AG04449 (cell line): ENCODE measurements at regions of chr17 and their contacts with region 1.

Region 1: DNA sequence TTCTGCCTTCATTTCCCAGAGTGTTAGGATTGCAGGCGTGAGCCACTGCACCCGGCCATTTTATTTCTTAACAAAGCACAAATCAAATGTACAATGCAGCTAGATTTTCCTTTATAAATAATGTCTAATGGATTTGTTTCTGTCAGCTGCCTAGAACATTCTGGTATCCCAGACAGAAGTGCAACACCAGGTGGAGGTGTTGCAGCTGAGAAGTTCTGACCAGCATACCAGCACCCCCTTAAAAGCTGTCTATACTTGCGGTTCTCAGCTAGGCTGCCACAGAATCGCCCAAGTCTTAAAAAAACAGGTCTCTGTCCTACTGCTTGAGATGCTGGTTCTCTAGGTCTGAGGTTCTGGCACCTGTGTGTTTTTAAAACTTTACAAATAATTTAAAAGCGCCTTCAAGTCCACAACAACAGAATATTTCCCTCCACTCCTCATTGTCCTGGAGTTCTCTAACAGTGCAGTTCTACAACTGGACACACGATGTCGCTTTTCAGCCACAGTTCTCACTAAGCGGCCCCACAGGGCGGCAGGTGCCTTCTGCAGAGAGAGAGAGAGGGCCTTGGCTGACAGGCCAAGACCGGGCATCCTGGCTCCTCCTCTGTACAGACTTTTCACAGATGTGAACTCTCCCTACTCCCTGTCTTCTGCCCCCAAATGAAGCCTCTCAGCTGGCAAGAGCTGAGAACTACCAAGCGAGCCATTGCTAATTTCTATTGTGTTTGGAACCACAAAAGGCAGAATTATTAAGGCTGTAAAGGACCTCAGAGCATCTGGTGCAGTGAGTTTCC is 32.6 kb upstream of the MEOX1 start:
- DNase-seq: no peak
- H3K4me3 ChIP-seq: no peak overlapping the region
- CTCF ChIP-seq: peak; percentile 78

Region 2: DNA sequence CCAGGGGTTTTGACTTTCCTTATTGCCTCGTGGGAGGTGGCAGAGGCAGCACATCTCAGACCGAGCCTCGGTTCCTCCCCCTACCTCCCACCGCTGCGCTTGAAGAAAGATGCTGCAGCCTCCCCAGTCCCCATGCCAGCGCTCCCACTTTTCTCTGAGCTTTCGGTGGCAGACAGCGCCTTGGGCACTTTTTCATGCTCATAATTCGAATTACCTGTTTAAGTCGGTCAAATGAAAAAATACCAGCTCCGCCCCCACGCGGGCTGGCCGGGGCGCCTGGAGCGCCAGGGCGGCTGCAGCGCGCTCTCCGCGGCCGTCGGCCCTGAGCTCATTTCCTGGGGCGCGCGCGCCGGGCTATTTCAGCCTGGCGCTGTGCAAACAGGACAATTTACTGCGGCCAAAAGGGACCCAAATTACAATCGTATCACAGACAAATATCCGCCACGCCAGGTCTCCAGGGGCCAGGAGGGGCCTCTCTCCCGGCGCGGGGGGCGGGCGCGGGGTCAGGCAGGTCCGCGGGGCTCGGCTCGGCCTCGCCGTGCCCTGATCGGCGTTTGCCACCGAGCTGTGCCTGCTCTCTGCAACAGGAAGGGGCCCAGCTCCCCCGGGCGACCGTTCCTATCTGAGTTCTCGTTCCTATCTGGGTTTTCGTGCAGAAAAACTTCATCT is 19.4 kb after region 1 on chr17:
- CTCF ChIA-PET with region 1: interaction called, 24 read pairs
- POLR2A ChIA-PET with region 1: no interaction called
- DNase-seq: no peak
- H3K4me3 ChIP-seq: peak overlapping the region; percentile 52
- CTCF ChIP-seq: no peak

Region 3: GRCh38 chr17:43740541-43740940 is 46.3 kb after region 1 on chr17:
- CTCF ChIA-PET with region 1: interaction called, 47 read pairs
- POLR2A ChIA-PET with region 1: no interaction called
- DNase-seq: no peak
- H3K4me3 ChIP-seq: no peak overlapping the region
- CTCF ChIP-seq: no peak

Region 4: DNA sequence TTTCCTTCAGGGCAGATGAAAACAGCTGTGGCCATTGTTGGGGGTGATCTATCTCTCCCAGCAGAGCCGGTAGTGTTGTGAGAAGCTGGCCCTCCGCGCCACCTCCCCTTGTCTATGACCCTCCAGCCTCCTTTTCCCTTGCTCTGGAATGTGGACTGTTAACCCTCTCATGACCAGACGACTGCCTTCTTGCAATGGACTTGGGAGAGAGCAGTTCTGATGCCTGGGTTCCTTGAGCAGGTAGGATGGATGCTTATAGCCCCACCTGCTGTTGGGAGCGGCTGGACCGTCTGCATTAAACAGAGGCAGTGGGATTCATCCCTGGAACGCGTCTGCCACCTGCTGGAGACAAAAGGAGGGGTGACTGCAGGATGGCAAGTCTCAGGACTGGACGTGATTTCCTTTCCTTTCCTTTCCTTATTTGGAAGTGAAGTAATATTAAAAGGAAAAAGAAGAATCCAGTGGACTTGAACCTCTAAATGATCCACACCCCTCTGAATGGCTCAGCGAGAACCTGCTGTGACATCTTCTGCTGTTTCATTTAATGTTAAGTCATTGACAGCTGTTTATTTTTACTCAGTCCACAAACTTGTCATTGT is 66.1 kb after region 1 on chr17:
- CTCF ChIA-PET with region 1: interaction called, 1,463 read pairs
- POLR2A ChIA-PET with region 1: interaction called, 5 read pairs
- DNase-seq: peak; percentile 65
- H3K4me3 ChIP-seq: no peak overlapping the region
- CTCF ChIP-seq: peak; percentile 94